Heart right ventricle (tissue), 16 donors: ENCODE measurements at regions of chr3 and their contacts with region 1.

Region 1: DNA sequence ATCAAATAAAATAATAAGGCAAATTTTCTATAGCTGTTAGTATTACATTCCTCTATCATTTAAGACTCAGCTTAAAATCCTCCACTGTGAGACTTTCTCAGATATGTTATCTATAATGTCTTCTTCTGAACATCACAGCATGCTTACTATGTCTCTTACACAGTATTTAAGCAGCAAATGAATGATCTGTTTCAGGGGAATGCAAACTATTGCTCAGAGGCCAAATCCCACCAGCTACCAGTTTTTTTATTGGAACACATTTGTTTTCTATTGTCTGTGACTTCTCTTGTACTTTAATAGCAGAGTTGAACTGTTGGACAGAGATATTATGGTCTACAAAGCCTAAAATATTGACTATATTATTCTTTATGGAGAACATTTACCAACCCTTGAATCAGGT is 59.6 kb downstream of the C3orf38 start:
- DNase-seq: no peak
- ATAC-seq: no peak
- H3K4me3 ChIP-seq: no peak overlapping the region
- H3K27ac ChIP-seq: no peak overlapping the region
- H3K4me1 ChIP-seq: no peaks in the 10 kb centered on the region
- H3K27me3 ChIP-seq: no peaks in the 10 kb centered on the region
- CTCF ChIP-seq: no peak

Region 2: GRCh38 chr3:88876724-88877123 is 667.4 kb after region 1 on chr3:
- intact Hi-C with region 1: no loop called
- DNase-seq: no peak
- ATAC-seq: no peak
- H3K4me3 ChIP-seq: no peak overlapping the region
- H3K27ac ChIP-seq: no peak overlapping the region
- H3K4me1 ChIP-seq: no peaks in the 10 kb centered on the region
- H3K27me3 ChIP-seq: no peaks in the 10 kb centered on the region
- CTCF ChIP-seq: no peak

Region 3: DNA sequence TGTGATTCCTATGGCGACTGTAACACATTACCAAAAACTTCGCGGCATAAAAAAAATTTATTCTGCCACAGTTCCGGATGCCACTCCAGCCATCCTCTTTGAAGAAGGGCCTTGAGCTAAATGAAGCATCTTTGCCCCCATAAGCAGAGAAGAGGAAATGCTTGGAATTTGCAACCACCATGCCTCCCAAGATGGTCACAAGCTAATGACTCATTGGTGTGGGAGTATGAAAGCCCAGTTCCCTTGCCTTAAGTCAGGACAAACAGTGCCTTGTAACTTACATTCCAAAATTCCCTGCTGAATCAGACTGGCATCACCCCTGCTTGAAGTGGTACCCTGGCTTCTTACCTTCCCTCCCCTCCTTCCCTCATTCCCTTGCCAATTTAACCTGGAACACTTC is 1975.5 kb after region 1 on chr3:
- intact Hi-C with region 1: loop called in 9 of 10 experiments (anchors 5 to 10 kb)
- DNase-seq: no peak
- ATAC-seq: no peak
- H3K4me3 ChIP-seq: no peak overlapping the region
- H3K27ac ChIP-seq: no peak overlapping the region
- H3K4me1 ChIP-seq: peaks cover 0 to 5% (median 0%) of the 10 kb centered on the region in 9 donors
- H3K27me3 ChIP-seq: no peaks in the 10 kb centered on the region
- CTCF ChIP-seq: no peak